Caco-2 (cell line): ENCODE measurements at regions of chr2 and their contacts with region 1.

Region 1: DNA sequence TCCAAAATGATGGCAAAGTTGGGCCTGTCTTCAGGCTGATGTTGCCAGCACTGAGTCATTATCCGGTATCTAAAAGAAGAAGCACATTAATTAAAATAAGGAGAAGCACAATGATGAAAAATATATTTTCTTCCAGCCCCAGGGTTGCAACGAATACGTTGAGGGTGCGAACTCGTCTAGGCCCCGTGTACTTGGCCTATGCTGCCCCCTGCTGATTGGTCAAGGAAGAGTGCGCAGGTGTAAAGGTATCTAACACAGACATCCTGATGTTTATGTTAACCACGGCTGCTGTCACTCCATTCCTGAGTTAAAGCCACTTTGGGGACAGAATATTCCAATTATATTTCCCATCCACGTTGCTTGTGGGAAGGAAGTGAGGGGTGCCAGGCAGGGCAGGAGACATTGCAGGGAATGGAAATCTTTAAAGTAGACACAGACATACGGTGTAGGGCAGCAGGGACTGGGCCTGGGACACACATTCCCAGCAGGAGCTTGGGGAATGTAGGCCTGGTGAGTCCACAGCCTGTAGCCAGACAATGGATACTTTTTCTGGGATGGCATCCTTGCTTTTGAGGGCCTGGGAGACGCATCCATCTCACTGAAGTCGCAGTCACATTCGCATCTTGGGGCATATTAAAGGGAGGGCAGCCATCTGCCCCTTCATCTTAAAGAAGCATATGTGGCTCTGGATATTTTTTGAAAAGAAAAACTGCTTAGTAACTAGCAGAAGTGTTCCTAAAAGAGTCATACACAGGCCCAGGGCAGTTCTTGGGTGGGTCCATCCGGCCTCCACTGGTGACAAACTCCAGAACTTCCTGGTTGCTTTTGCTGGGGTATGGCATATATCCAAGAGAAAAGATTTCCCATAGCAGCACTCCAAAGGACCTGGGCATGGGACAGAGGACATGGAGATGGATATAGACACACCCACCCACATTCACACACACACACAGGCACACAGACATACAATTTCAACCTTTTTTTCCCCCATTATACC is 81.9 kb downstream of the CLIP4 start:
- DNase-seq: peak; percentile 80 to 89
- H3K4me3 ChIP-seq: no peak overlapping the region
- H3K4me3 Mint-ChIP-seq: no peak overlapping the region
- H3K27ac Mint-ChIP-seq: no peak overlapping the region
- H3K4me1 ChIP-seq: no peaks in the 10 kb centered on the region
- H3K4me1 Mint-ChIP-seq: peaks cover 4% of the 10 kb centered on the region
- H3K27me3 ChIP-seq: no peaks in the 10 kb centered on the region
- H3K27me3 Mint-ChIP-seq: peaks cover 4% of the 10 kb centered on the region
- CTCF ChIP-seq: peak; percentile 88 to 92

Region 2: DNA sequence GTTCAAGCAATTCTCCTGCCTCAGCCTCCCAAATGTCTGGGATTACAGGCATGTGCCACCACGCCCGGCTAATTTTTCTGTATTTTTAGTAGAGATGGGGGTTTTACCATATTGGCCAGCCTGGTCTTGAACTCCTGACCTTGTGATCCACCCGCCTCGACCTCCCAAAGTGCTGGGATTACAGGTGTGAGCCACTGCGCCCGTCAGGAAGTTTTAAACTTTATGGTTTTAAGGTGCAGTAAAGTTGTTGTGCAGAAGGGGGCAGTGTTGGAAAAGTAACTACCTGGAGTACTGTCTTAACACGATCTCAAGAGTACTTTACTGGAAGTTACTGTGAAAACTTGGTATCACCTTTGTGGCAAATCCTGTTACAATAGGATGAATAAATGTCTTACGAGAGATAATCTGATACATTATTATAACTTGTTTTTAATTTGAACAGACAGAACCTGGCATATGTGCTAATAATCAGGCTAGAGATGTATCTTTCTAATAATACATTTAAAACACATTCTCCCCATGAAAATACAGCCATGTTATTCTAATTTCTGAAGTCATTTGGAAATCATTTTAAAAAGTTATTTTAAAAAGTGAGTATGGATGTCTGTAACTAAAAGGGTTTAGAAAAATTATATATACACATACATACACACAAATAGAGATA is 375.7 kb before region 1 on chr2:
- CTCF ChIA-PET with region 1: no interaction called
- POLR2A ChIA-PET with region 1: no interaction called
- intact Hi-C with region 1: loop called (anchors 1 kb)
- DNase-seq: peak; percentile 69 to 87
- H3K4me3 ChIP-seq: no peak overlapping the region
- H3K4me3 Mint-ChIP-seq: no peak overlapping the region
- H3K27ac Mint-ChIP-seq: no peak overlapping the region
- H3K4me1 ChIP-seq: no peaks in the 10 kb centered on the region
- H3K4me1 Mint-ChIP-seq: no peaks in the 10 kb centered on the region
- H3K27me3 ChIP-seq: no peaks in the 10 kb centered on the region
- H3K27me3 Mint-ChIP-seq: no peaks in the 10 kb centered on the region
- CTCF ChIP-seq: peak; percentile 68 to 75

Region 3: GRCh38 chr2:29053670-29054400 is 143.3 kb before region 1 on chr2:
- CTCF ChIA-PET with region 1: no interaction called
- POLR2A ChIA-PET with region 1: no interaction called
- intact Hi-C with region 1: loop called (anchors 1 kb)
- DNase-seq: peak in 1 of 2 experiments; percentile 18
- H3K4me3 ChIP-seq: no peak overlapping the region
- H3K4me3 Mint-ChIP-seq: no peak overlapping the region
- H3K27ac Mint-ChIP-seq: no peak overlapping the region
- H3K4me1 ChIP-seq: peaks cover 11% of the 10 kb centered on the region
- H3K4me1 Mint-ChIP-seq: peaks cover 33% of the 10 kb centered on the region
- H3K27me3 ChIP-seq: no peaks in the 10 kb centered on the region
- H3K27me3 Mint-ChIP-seq: no peaks in the 10 kb centered on the region
- CTCF ChIP-seq: peak in 1 of 2 experiments; percentile 41

Region 4: GRCh38 chr2:29108225-29108624 is 88.9 kb before region 1 on chr2:
- CTCF ChIA-PET with region 1: no interaction called
- POLR2A ChIA-PET with region 1: no interaction called
- intact Hi-C with region 1: loop called (anchors 5 kb)
- DNase-seq: peak in 1 of 2 experiments; percentile 36
- H3K4me3 ChIP-seq: no peak overlapping the region
- H3K4me3 Mint-ChIP-seq: no peak overlapping the region
- H3K27ac Mint-ChIP-seq: no peak overlapping the region
- H3K4me1 ChIP-seq: no peaks in the 10 kb centered on the region
- H3K4me1 Mint-ChIP-seq: no peaks in the 10 kb centered on the region
- H3K27me3 ChIP-seq: no peaks in the 10 kb centered on the region
- H3K27me3 Mint-ChIP-seq: no peaks in the 10 kb centered on the region
- CTCF ChIP-seq: no peak

Region 5: GRCh38 chr2:29165362-29166236 is 31.5 kb before region 1 on chr2:
- CTCF ChIA-PET with region 1: no interaction called
- POLR2A ChIA-PET with region 1: no interaction called
- intact Hi-C with region 1: loop called (anchors 1 kb)
- DNase-seq: peak in 1 of 2 experiments; percentile 12
- H3K4me3 ChIP-seq: no peak overlapping the region
- H3K4me3 Mint-ChIP-seq: no peak overlapping the region
- H3K27ac Mint-ChIP-seq: no peak overlapping the region
- H3K4me1 ChIP-seq: peaks cover 3% of the 10 kb centered on the region; the same call in 1 of the 2 replicates
- H3K4me1 Mint-ChIP-seq: peaks cover 13% of the 10 kb centered on the region
- H3K27me3 ChIP-seq: no peaks in the 10 kb centered on the region
- H3K27me3 Mint-ChIP-seq: no peaks in the 10 kb centered on the region
- CTCF ChIP-seq: no peak